Heart left ventricle (tissue), 16 donors: ENCODE measurements at regions of chr10 and their contacts with region 1.

Region 1: GRCh38 chr10:36194276-36194675 is 552.2 kb upstream of the FZD8 start:
- DNase-seq: no peak
- ATAC-seq: no peak
- H3K4me3 ChIP-seq: no peak overlapping the region
- H3K27ac ChIP-seq: no peak overlapping the region
- H3K4me1 ChIP-seq: no peaks in the 10 kb centered on the region
- H3K27me3 ChIP-seq: no peaks in the 10 kb centered on the region
- CTCF ChIP-seq: no peak
- POLR2A ChIP-seq: no peak

Region 2: GRCh38 chr10:36280321-36280741 is 86.1 kb after region 1 on chr10:
- intact Hi-C with region 1: loop called in 1 of 10 experiments (anchors 10 kb)
- DNase-seq: no peak
- ATAC-seq: no peak
- H3K4me3 ChIP-seq: no peak overlapping the region
- H3K27ac ChIP-seq: no peak overlapping the region
- H3K4me1 ChIP-seq: no peaks in the 10 kb centered on the region
- H3K27me3 ChIP-seq: no peaks in the 10 kb centered on the region
- CTCF ChIP-seq: no peak
- POLR2A ChIP-seq: no peak